T-cell (primary cell): ENCODE measurements at regions of chr5 and their contacts with region 1.

Region 1: GRCh38 chr5:39217365-39218281 is 1.7 kb downstream of the FYB1 start:
- DNase-seq: peak in 34 of 35 experiments; percentile 41 to 92 (median 72)
- ATAC-seq: peak; percentile 76 to 82 (median 80)
- H3K4me3 ChIP-seq: peak overlapping the region; percentile 52 to 85
- H3K4me3 Mint-ChIP-seq: peak overlapping the region; percentile 65 to 82 (median 72)
- H3K27ac ChIP-seq: peak overlapping the region; percentile 87
- H3K27ac Mint-ChIP-seq: peak overlapping the region; percentile 93 to 98
- H3K4me1 ChIP-seq: peaks cover 48 to 64% of the 10 kb centered on the region in 2 experiments
- H3K4me1 Mint-ChIP-seq: peaks cover 75 to 81% (median 81%) of the 10 kb centered on the region in 3 donors
- H3K27me3 ChIP-seq: no peaks in the 10 kb centered on the region
- H3K27me3 Mint-ChIP-seq: no peaks in the 10 kb centered on the region

Region 2: GRCh38 chr5:38467353-38468040 is 750.1 kb before region 1 on chr5:
- CTCF ChIA-PET with region 1: no interaction called
- POLR2A ChIA-PET with region 1: no interaction called
- DNase-seq: no peak
- ATAC-seq: no peak
- H3K4me3 ChIP-seq: no peak overlapping the region
- H3K4me3 Mint-ChIP-seq: no peak overlapping the region
- H3K27ac ChIP-seq: no peak overlapping the region
- H3K27ac Mint-ChIP-seq: no peak overlapping the region
- H3K4me1 ChIP-seq: no peaks in the 10 kb centered on the region
- H3K4me1 Mint-ChIP-seq: peaks cover 0 to 2% (median 0%) of the 10 kb centered on the region in 3 donors
- H3K27me3 ChIP-seq: peaks cover 3 to 60% of the 10 kb centered on the region in 2 experiments
- H3K27me3 Mint-ChIP-seq: peaks cover 37 to 49% of the 10 kb centered on the region in 2 donors

Region 3: DNA sequence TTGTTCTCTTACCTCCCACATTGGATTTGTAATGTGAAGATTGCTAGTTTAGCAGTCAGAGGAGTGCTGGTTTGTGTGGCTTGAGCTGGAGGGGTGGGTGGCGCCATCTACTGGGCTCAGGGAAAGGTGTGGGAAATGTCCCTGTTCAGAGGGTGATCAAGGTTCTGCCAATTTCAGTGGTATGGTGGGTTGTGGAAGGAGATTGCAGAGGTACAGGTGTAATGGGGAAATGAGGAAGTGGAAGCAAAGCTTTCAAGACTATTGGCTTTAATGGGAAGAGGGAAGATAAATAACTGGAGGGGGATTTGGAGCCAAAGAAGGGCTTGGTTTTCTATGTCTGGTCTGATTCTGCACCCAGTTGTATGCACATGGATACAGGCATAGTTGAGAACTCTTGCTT is 295.4 kb before region 1 on chr5:
- CTCF ChIA-PET with region 1: no interaction called
- POLR2A ChIA-PET with region 1: no interaction called
- DNase-seq: peak in 29 of 35 experiments; percentile 4 to 58 (median 27)
- ATAC-seq: peak; percentile 37 to 62 (median 56)
- H3K4me3 ChIP-seq: no peak overlapping the region
- H3K4me3 Mint-ChIP-seq: no peak overlapping the region
- H3K27ac ChIP-seq: no peak overlapping the region
- H3K27ac Mint-ChIP-seq: no peak overlapping the region
- H3K4me1 ChIP-seq: no peaks in the 10 kb centered on the region
- H3K4me1 Mint-ChIP-seq: no peaks in the 10 kb centered on the region
- H3K27me3 ChIP-seq: peaks cover 0 to 6% of the 10 kb centered on the region in 2 experiments
- H3K27me3 Mint-ChIP-seq: peaks cover 35 to 48% of the 10 kb centered on the region in 2 donors

Region 4: DNA sequence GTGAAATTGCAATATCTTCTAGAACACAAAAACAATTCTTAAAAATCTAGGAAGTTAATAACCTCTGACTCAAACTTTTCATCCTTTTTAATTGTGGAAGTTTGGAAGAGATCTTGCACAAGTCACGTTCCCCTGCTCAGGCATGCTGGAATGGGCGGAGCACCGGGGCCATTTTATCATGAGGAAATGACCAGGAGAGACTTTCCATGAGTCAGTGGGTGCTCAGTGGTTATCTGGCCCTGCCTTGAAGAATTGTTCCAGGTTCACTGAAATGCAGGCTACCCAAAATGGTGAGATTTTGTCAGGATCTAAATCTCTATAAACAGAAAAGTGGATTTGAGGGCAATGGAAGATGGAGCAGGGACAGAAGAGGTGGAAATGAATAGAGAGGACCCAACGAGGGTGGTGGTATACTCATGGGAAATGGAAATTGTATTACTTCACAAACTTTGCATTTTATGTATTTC is 59.5 kb before region 1 on chr5:
- CTCF ChIA-PET with region 1: interaction called, 4 to 26 read pairs
- POLR2A ChIA-PET with region 1: interaction called, 4 read pairs
- DNase-seq: no peak
- ATAC-seq: no peak
- H3K4me3 ChIP-seq: no peak overlapping the region
- H3K4me3 Mint-ChIP-seq: peak overlapping the region; percentile 43 to 56 (median 50)
- H3K27ac ChIP-seq: peak overlapping the region; percentile 31
- H3K27ac Mint-ChIP-seq: peak overlapping the region; percentile 72 to 81
- H3K4me1 ChIP-seq: peaks cover 38 to 69% of the 10 kb centered on the region in 2 experiments
- H3K4me1 Mint-ChIP-seq: peaks cover 87 to 92% (median 91%) of the 10 kb centered on the region in 3 donors
- H3K27me3 ChIP-seq: no peaks in the 10 kb centered on the region
- H3K27me3 Mint-ChIP-seq: no peaks in the 10 kb centered on the region

Region 5: DNA sequence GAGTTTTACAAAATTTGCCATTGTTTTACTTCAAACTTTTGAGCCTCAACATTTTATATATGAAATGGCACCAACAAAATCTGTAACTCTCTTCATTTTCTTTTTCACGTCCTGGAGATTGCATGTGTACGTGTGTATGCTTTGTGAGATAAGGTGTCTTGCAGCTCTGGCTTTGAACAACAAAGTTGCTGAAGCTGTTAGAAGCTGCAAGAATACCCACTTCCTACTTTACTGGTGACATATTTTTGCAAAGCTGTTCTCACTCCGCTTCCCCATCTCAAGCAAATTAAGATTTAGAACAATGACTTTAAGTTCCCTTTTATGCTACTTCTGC is 40.0 kb before region 1 on chr5:
- CTCF ChIA-PET with region 1: interaction called, 6 to 61 read pairs
- POLR2A ChIA-PET with region 1: interaction called, 4 to 6 read pairs
- DNase-seq: peak in 13 of 35 experiments; percentile 38 to 80 (median 51)
- ATAC-seq: peak; percentile 73 to 78 (median 76)
- H3K4me3 ChIP-seq: peak overlapping the region in 1 of 2 donors; percentile 17
- H3K4me3 Mint-ChIP-seq: peak overlapping the region; percentile 56 to 70 (median 67)
- H3K27ac ChIP-seq: peak overlapping the region; percentile 72
- H3K27ac Mint-ChIP-seq: peak overlapping the region; percentile 97 to 98
- H3K4me1 ChIP-seq: peaks cover 58 to 84% of the 10 kb centered on the region in 2 experiments
- H3K4me1 Mint-ChIP-seq: peaks cover 98 to 100% (median 98%) of the 10 kb centered on the region in 3 donors
- H3K27me3 ChIP-seq: no peaks in the 10 kb centered on the region
- H3K27me3 Mint-ChIP-seq: no peaks in the 10 kb centered on the region

Region 6: DNA sequence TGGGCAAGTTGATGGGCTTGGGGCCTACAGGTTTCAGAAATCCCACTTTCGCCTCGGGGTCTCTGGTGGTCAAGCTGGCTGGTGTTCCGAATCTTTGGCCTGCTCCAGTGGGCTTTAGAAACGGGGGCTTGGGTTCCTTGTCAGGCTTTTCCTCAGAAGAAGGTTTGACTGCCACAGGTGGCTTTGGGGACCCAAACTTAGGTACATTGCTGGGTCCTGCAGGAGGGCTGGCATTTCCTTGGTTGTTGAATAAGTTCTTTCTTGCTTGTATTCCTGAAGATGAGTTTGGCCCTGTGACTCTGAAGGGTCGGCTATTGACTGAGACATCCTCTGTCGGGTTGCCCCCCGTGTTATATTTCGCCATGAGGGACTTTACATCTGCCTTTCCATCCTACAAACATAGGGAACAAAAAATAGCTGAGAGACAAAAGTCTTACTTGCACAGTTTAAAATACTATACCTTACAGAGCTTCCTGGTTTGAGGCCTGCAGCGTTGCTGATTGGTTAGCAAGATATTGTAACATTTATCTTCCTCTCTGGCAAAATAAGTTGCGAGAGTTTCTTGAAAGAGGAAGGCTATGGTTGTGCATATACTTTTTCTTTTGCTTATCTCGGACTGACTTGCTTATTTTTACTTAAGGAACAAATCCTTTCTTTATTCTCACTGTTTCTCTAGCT is 14.9 kb before region 1 on chr5:
- CTCF ChIA-PET with region 1: interaction called, 19 to 67 read pairs
- POLR2A ChIA-PET with region 1: interaction called, 6 to 9 read pairs
- DNase-seq: peak in 14 of 35 experiments; percentile 31 to 70 (median 42)
- ATAC-seq: peak; percentile 59 to 74 (median 61)
- H3K4me3 ChIP-seq: peak overlapping the region; percentile 78 to 93
- H3K4me3 Mint-ChIP-seq: peak overlapping the region; percentile 92 to 95 (median 95)
- H3K27ac ChIP-seq: peak overlapping the region; percentile 87
- H3K27ac Mint-ChIP-seq: peak overlapping the region; percentile 96 to 98
- H3K4me1 ChIP-seq: peaks cover 29 to 42% of the 10 kb centered on the region in 2 experiments
- H3K4me1 Mint-ChIP-seq: peaks cover 46 to 48% (median 47%) of the 10 kb centered on the region in 3 donors
- H3K27me3 ChIP-seq: no peaks in the 10 kb centered on the region
- H3K27me3 Mint-ChIP-seq: no peaks in the 10 kb centered on the region

Region 7: DNA sequence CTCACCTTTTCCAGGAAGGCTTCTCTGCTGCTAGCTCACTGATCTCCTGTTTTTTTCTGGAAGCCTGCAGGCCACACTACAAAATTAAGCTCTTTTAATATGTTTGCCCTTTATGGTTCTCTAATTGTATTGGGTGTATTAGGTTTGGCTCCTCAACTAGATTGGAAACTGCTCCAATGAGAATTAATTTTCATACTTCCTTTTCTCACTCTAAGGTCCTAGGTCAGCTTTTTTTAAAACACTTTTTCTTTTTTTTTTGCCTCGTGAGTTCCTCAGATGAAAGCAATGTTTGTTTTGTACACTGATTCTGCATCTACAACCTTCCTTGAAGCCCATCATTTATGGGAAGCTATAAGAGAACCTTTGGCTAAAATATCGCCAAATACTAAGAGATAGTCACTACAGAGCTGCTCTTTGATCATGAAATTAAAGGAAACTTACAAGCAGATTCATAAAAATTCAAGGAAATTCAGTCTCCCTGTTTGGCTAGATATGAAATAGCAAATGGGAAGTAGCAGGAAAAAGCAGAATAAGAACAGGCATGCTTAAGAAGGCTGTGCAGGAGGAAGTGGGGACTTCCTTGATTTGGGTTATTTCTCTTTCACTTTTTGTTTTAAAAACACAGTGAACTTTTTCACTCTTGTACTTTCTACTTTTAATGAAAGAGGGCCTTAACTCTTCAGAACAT is 56.9 kb after region 1 on chr5:
- CTCF ChIA-PET with region 1: interaction called, 10 to 50 read pairs
- POLR2A ChIA-PET with region 1: interaction called, 4 read pairs
- DNase-seq: peak in 1 of 35 experiments; percentile 67
- ATAC-seq: peak; percentile 63 to 70 (median 66)
- H3K4me3 ChIP-seq: peak overlapping the region in 1 of 2 donors; percentile 43
- H3K4me3 Mint-ChIP-seq: peak overlapping the region; percentile 70 to 85 (median 82)
- H3K27ac ChIP-seq: peak overlapping the region; percentile 98
- H3K27ac Mint-ChIP-seq: peak overlapping the region; percentile 98
- H3K4me1 ChIP-seq: peaks cover 27 to 29% of the 10 kb centered on the region in 2 experiments
- H3K4me1 Mint-ChIP-seq: peaks cover 49 to 63% (median 55%) of the 10 kb centered on the region in 3 donors
- H3K27me3 ChIP-seq: no peaks in the 10 kb centered on the region
- H3K27me3 Mint-ChIP-seq: no peaks in the 10 kb centered on the region

Region 8: DNA sequence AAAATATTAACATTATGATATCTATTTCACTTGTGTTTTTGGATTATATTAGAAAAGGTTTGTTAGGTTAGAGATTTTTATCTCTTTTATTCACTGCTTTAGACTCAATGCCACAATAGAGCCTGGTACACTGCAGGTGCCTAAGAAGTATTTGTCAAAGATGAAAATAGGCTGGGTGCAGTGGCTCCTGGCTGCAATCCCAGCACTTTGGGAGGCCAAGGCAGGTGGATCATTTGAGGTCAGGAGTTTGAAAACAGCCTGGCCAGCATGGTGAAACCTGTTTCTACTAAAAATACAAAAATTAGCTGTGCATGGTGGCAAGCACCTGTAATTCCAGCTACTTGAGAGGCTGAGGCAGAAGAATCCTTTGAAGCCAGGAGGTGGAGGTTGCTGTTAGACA is 82.3 kb after region 1 on chr5:
- CTCF ChIA-PET with region 1: no interaction called
- POLR2A ChIA-PET with region 1: no interaction called
- DNase-seq: no peak
- ATAC-seq: no peak
- H3K4me3 ChIP-seq: no peak overlapping the region
- H3K4me3 Mint-ChIP-seq: no peak overlapping the region
- H3K27ac ChIP-seq: no peak overlapping the region
- H3K27ac Mint-ChIP-seq: no peak overlapping the region
- H3K4me1 ChIP-seq: no peaks in the 10 kb centered on the region
- H3K4me1 Mint-ChIP-seq: no peaks in the 10 kb centered on the region
- H3K27me3 ChIP-seq: no peaks in the 10 kb centered on the region
- H3K27me3 Mint-ChIP-seq: no peaks in the 10 kb centered on the region

Region 9: DNA sequence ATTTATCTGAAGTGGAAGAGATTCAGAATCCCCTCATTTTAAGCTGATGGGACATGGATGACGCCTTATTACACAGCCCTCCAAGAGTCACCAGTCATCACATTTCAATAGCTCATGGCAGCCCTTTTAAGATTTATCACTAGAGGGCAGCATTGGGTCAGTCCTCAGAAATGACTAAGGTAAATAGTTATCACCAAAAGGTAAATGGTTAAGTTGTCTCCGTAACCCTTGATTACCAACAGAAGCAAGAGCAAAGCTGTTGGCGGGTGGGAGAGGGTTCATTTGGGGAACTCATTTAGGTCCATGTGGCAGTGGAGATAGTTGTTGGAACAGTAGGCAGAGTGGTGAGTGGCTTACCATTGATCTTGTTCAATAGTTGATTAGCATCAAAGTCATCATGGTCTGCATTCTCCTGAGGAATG is 158.7 kb after region 1 on chr5:
- CTCF ChIA-PET with region 1: interaction called, 4 to 15 read pairs
- POLR2A ChIA-PET with region 1: no interaction called
- DNase-seq: peak in 15 of 35 experiments; percentile 2 to 61 (median 9)
- ATAC-seq: peak in 2 of 4 experiments; percentile 38 to 55
- H3K4me3 ChIP-seq: no peak overlapping the region
- H3K4me3 Mint-ChIP-seq: no peak overlapping the region
- H3K27ac ChIP-seq: no peak overlapping the region
- H3K27ac Mint-ChIP-seq: no peak overlapping the region
- H3K4me1 ChIP-seq: no peaks in the 10 kb centered on the region
- H3K4me1 Mint-ChIP-seq: no peaks in the 10 kb centered on the region
- H3K27me3 ChIP-seq: peaks cover 0 to 4% of the 10 kb centered on the region in 2 experiments
- H3K27me3 Mint-ChIP-seq: peaks cover 2 to 6% of the 10 kb centered on the region in 2 donors